AG04450 (cell line): ENCODE measurements at regions of chr5 and their contacts with region 1.

Region 1: GRCh38 chr5:81425569-81425968 is 31.6 kb upstream of the ACOT12 start:
- DNase-seq: no peak
- H3K4me3 ChIP-seq: no peak overlapping the region
- H3K27ac ChIP-seq: no peak overlapping the region
- H3K27me3 ChIP-seq: no peaks in the 10 kb centered on the region
- CTCF ChIP-seq: peak; percentile 61

Region 2: GRCh38 chr5:81310402-81311063 is 115.0 kb before region 1 on chr5:
- CTCF ChIA-PET with region 1: no interaction called
- POLR2A ChIA-PET with region 1: no interaction called
- DNase-seq: no peak
- H3K4me3 ChIP-seq: no peak overlapping the region
- H3K27ac ChIP-seq: no peak overlapping the region
- H3K27me3 ChIP-seq: no peaks in the 10 kb centered on the region
- CTCF ChIP-seq: no peak

Region 3: GRCh38 chr5:81450940-81451339 is 25.4 kb after region 1 on chr5:
- CTCF ChIA-PET with region 1: interaction called, 11 read pairs
- POLR2A ChIA-PET with region 1: no interaction called
- DNase-seq: no peak
- H3K4me3 ChIP-seq: no peak overlapping the region
- H3K27ac ChIP-seq: no peak overlapping the region
- H3K27me3 ChIP-seq: no peaks in the 10 kb centered on the region
- CTCF ChIP-seq: no peak

Region 4: GRCh38 chr5:81609810-81610375 is 184.3 kb after region 1 on chr5:
- CTCF ChIA-PET with region 1: no interaction called
- POLR2A ChIA-PET with region 1: no interaction called
- DNase-seq: no peak
- H3K4me3 ChIP-seq: no peak overlapping the region
- H3K27ac ChIP-seq: no peak overlapping the region
- H3K27me3 ChIP-seq: no peaks in the 10 kb centered on the region
- CTCF ChIP-seq: no peak

Region 5: DNA sequence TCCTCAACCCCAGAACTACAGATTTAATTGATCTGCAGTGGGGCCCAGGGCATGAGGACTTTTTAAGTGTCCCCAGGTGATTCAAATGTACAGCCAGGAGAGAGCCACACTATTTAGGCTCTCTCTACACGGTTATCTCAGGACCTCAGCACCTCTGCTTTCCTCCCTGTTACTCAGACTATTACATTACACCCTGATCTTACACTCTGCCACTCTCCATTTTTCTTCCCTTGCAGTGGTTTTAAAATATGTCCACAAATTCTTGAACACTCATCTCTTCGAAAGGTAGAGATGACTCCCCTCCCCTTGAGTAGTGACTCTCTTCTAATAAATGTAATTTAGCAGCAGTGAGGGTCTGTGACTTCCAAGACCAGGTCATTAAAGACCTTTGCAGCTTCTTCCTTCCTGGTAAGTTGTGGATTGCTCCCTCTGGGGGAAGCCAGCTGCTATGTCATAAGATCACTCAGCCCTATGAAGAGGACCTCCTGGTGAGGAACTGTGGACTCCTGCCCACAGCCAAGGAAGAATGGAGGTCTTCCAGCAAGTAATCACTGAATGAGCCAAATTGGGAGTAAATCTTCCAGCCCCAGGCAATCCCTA is 412.8 kb after region 1 on chr5:
- CTCF ChIA-PET with region 1: interaction called, 12 read pairs
- POLR2A ChIA-PET with region 1: no interaction called
- DNase-seq: no peak
- H3K4me3 ChIP-seq: no peak overlapping the region
- H3K27ac ChIP-seq: no peak overlapping the region
- H3K27me3 ChIP-seq: no peaks in the 10 kb centered on the region
- CTCF ChIP-seq: peak; percentile 62